Ascending aorta (tissue), 2 donors: ENCODE measurements at regions of chr11 and their contacts with region 1.

Region 1: DNA sequence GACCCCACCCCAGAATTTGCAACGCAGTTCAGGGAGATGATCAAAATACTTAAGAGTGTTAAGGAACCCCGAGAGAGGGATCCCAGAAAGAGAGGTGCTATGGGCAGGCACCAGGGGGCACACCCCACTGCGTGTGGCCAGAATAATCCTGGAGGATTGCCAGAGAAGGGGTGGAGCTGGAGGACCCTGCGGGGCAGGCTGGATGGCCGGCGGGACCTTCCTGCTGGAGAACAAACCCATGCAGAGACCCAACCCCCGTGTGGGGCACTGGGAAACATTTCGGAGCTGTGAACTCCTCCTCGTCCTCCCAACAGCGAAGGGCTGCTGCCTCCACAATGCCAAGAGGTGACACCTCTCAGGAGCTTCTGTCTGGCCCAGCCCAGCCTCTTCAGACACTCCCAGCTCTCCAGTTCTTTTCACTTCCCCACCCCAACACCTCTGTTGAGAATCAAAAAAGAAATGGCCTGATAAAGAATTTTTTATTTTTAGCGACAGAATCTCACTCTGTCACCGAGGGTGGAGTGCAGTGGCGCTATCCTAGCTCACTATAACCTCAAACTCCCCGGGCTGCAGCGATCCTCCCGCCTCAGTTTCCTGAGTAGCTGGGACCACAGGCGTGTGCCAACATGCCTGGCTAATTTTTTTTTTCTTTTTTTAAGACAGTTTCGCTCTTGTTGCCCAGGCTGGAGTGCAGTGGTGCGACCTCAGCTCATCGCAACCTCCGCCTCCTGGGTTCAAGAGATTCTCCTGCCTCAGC is 25.6 kb downstream of the RHOD start:
- DNase-seq: no peak
- H3K4me3 ChIP-seq: peak overlapping the region in 1 of 2 donors; percentile 44
- H3K27ac ChIP-seq: no peak overlapping the region
- H3K4me1 ChIP-seq: peaks cover 0 to 9% of the 10 kb centered on the region in 2 donors
- H3K27me3 ChIP-seq: no peaks in the 10 kb centered on the region
- CTCF ChIP-seq: no peak

Region 2: DNA sequence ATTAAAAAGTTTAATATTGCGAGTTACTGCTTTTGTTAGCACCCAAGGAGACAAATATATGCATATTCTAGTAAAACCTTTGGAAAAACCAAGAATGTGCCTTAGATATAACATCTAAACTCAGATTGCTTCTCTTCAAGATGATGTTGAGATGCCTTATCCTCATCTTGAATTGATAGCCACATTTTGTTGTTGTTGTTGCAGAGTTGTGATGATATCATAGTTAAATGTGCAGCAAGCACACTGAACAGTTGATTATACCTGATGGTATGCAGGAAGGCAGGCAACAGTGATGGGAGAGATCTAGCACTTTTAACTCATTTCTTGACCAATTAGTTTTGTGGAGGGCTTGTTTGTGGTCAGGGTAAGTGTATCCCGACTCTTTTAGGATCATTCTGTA is 84.9 kb after region 1 on chr11:
- intact Hi-C with region 1: loop called (anchors 1 kb)
- DNase-seq: no peak
- H3K4me3 ChIP-seq: no peak overlapping the region
- H3K27ac ChIP-seq: no peak overlapping the region
- H3K4me1 ChIP-seq: peaks cover 0 to 2% of the 10 kb centered on the region in 2 donors
- H3K27me3 ChIP-seq: no peaks in the 10 kb centered on the region
- CTCF ChIP-seq: no peak